Activated CD4-positive, alpha-beta T cell treated with anti-CD3 and anti-CD28 coated beads, Interleukin-2, amount 10 ng/mL, durations not matched to agents 24 days and 14 days (primary cell): ENCODE measurements at regions of chr7 and their contacts with region 1.

Region 1: DNA sequence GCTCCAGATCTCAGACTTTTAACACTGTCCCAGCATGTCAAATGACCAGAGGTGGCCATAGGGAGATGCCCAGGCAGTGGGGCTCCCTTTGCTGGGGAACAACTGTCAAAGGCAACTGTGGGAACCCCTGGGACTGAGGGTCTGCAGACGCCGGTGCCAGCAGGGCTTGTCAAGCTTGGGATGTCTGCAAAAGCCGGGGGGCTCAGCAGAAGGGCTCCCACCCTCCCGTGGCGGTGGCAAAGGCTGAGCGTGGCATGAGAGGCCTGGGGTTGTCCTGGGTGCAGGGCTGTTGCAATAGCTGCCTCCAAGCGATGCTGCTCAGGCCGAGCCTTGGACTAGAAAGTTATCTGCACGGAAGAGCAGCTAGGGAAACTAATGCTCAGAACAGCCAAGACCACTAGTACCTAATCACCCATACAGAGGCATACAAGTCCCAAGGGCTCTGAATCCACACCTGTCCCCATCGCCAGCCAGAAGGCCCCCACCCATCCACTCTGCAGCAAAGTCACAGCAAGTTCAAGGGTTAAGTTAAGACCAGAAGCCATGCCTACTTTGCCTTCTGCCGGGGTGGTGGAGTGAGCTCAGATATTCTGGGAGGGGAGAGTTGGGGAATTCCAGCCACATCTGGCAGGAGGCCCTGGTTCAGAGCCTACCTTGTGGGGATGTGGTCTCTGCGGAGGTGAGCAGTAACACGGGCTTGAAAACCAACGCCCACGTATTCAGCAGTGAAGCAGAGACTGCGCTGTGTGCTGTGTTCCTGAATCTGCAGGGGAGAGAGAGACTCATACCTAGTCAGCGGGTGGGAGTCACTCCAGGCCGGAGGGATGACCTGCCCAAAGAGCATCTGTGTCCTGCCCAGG is 4.6 kb downstream of the SH2B2 start:
- DNase-seq: peak; percentile 75
- H3K4me3 Mint-ChIP-seq: peak overlapping the region; percentile 13
- H3K27ac Mint-ChIP-seq: peak overlapping the region; percentile 60
- H3K4me1 Mint-ChIP-seq: peaks cover 12% of the 10 kb centered on the region
- H3K27me3 Mint-ChIP-seq: peaks cover 9% of the 10 kb centered on the region

Region 2: GRCh38 chr7:102306875-102307677 is 15.8 kb after region 1 on chr7:
- intact Hi-C with region 1: loop called (anchors 2 kb)
- DNase-seq: peak; percentile 82
- H3K4me3 Mint-ChIP-seq: no peak overlapping the region
- H3K27ac Mint-ChIP-seq: peak overlapping the region; percentile 60
- H3K4me1 Mint-ChIP-seq: peaks cover 12% of the 10 kb centered on the region
- H3K27me3 Mint-ChIP-seq: no peaks in the 10 kb centered on the region